Activated T-helper 2 cell treated with anti-CD3 and anti-CD28 coated beads, Interferon-gamma antibody, Interleukin-2, Interleukin-4, amounts not matched to agents 10 μg/mL and 5 μg/mL and 100 μg/mL, durations not matched to agents 14 hours and 24 hours and 36 hours (primary cell): ENCODE measurements at regions of chr19 and their contacts with region 1.

Region 1: DNA sequence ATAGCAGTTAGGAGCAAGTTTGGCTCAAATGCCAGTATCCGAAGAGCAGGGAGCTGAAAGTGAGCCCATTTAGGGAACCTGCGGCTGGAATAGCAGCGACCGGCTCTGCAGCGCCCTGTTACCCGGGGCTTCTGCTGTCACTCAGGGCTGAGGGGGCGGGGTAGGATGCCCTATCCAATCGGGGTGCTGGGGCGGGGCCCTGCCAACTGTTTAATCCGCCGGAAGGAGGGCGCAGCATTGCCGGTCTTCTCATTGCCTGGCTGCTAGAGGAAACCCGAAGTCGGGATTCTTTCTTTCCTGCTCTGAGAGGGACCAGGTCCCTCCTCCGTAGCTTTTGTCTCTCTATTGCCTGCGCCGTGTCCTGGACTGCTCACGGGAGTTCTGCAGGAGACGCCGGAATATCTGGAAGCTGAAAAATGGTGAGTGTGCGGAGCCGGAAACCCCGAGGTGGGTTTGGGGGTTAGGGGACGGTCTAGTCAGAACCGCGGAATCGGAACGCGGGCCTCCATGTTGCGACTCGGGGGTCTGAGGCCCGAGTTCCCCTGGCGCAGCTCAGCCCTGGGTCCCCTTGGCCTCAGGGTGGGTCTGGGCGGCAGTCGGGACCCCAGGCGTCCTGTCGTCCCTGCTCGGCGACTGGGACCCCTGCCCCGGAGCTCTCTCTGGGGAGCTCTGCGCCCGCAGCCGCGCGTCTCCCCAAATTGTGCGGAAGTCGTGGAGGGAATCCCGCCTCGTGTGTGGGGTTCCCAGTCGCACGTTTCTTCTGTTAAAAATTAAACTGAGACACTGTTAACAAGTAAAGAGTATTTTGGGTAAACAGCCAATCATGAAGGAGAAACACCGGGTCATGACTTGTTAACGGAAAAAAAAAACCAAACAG is 22.8 kb downstream of the ZNF763 start:
- DNase-seq: peak; percentile 87
- H3K4me3 Mint-ChIP-seq: peak overlapping the region; percentile 98
- H3K27ac Mint-ChIP-seq: peak overlapping the region; percentile 97
- H3K4me1 Mint-ChIP-seq: peaks cover 15% of the 10 kb centered on the region
- H3K27me3 Mint-ChIP-seq: no peaks in the 10 kb centered on the region

Region 2: DNA sequence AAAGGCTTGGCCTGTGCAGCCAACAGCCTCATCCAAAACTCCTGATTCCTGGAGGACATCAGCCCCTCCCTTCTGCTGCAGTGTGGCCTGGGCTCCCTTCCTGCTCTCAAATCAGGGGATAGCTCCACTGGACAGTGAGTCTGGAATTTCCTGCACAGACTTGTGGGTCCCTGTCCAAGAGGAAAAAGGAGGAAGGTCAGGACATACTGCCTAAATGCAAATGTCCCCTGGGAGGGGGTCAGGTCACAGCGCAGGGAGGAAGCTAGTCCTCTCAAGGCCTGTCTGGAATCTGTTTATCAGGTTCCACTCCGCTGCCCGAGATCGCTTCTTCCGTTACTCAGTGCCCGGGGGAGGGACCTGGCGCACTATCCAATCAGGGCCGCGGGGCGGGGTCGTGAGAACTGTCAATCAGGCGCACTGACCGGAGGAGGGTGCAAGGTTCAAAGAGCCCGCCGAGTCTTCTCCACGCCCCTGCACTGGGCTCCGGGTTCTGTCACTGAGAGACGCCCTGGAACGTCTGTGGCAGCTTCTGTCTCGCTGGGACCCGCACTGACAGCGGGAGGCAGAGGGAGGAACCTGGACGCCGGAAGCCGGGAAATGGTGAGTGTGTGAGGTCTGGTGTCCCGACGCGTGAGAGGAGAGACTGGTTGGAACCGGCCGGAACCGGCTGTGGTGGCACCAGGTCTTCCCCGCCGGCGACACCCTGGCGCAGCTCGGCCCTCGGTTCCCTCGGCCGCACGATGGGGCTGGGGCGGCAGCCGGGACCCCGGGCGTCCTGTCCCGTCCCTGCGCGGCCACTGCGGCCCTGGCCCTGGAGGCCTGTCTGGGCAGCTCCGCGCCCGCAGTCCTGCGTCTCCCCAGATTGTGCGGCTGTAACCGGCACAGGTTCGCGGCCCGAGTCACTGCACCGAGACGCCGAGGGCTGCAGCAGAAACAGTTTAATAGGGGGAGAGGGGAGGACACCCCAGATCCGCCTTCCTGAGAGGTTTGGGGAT is 220.7 kb before region 1 on chr19 and contains the start of gene ZNF441:
- intact Hi-C with region 1: no loop called
- DNase-seq: peak; percentile 89
- H3K4me3 Mint-ChIP-seq: peak within 1 kb of the TSS; percentile 96
- H3K27ac Mint-ChIP-seq: peak within 1 kb of the TSS; percentile 93
- H3K4me1 Mint-ChIP-seq: peaks cover 11% of the 10 kb centered on the region
- H3K27me3 Mint-ChIP-seq: peaks cover 3% of the 10 kb centered on the region
- total RNA-seq, gene ZNF441: 4.2 and 4.9 TPM in 2 replicates

Region 3: GRCh38 chr19:11798391-11799330 is 189.0 kb before region 1 on chr19 and contains the start of gene ZNF491:
- intact Hi-C with region 1: loop called (anchors 2 kb)
- DNase-seq: peak; percentile 80
- H3K4me3 Mint-ChIP-seq: peak within 1 kb of the TSS; percentile 85
- H3K27ac Mint-ChIP-seq: peak within 1 kb of the TSS; percentile 62
- H3K4me1 Mint-ChIP-seq: peaks cover 9% of the 10 kb centered on the region
- H3K27me3 Mint-ChIP-seq: peaks cover 4% of the 10 kb centered on the region
- total RNA-seq, gene ZNF491: 0.67 and 0.82 TPM in 2 replicates

Region 4: GRCh38 chr19:11881151-11881800 is 106.4 kb before region 1 on chr19:
- intact Hi-C with region 1: loop called (anchors 2 kb)
- DNase-seq: peak; percentile 48
- H3K4me3 Mint-ChIP-seq: no peak overlapping the region
- H3K27ac Mint-ChIP-seq: no peak overlapping the region
- H3K4me1 Mint-ChIP-seq: peaks cover 1% of the 10 kb centered on the region
- H3K27me3 Mint-ChIP-seq: peaks cover 3% of the 10 kb centered on the region

Region 5: GRCh38 chr19:11964858-11965645 is 22.6 kb before region 1 on chr19 and contains the start of gene ZNF763:
- intact Hi-C with region 1: loop called (anchors 1 kb)
- DNase-seq: peak; percentile 80
- H3K4me3 Mint-ChIP-seq: peak within 1 kb of the TSS; percentile 83
- H3K27ac Mint-ChIP-seq: peak within 1 kb of the TSS; percentile 82
- H3K4me1 Mint-ChIP-seq: peaks cover 17% of the 10 kb centered on the region
- H3K27me3 Mint-ChIP-seq: no peaks in the 10 kb centered on the region
- total RNA-seq, gene ZNF763: 0.43 and 0.74 TPM in 2 replicates

Region 6: DNA sequence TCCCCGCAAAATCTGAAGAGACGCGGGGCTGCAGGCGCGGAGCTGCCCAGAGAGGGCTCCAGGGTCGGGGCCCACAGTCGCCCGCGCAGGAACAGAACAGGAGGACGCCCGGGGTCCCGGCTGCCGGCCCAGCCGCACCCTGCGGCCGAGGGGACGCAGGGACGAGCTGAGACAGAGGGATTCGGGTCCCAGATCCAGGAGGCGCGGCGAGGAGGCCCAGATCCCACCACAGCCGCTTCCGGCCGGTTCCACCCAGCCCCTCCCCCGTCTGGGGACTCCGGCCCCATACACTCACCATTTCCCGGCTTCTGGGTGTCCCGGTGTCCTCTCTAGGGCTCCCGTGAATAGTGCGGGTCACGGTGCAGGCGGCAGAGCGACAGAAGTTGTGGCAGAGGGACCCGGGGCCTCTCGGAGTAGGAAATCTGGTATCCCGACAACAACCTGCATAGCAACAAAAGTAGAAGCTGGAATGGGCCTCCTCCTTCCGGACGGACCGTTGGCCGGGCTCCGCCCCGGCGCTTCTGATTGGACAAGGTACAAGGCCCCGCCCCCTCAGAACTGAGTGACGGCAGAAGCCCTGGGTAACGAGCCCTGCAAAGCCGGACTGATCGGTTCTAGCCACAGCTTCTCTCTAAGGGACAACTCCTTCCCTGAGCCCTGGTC is 152.4 kb after region 1 on chr19 and contains the start of gene ZNF20:
- intact Hi-C with region 1: loop called (anchors 2 kb)
- DNase-seq: peak; percentile 88
- H3K4me3 Mint-ChIP-seq: peak within 1 kb of the TSS; percentile 91
- H3K27ac Mint-ChIP-seq: peak within 1 kb of the TSS; percentile 82
- H3K4me1 Mint-ChIP-seq: peaks cover 24% of the 10 kb centered on the region
- H3K27me3 Mint-ChIP-seq: no peaks in the 10 kb centered on the region
- total RNA-seq, gene ZNF20: 4.1 and 4.3 TPM in 2 replicates